Colonic mucosa (tissue), 4 donors: ENCODE measurements at regions of chr19 and their contacts with region 1.

Region 1: DNA sequence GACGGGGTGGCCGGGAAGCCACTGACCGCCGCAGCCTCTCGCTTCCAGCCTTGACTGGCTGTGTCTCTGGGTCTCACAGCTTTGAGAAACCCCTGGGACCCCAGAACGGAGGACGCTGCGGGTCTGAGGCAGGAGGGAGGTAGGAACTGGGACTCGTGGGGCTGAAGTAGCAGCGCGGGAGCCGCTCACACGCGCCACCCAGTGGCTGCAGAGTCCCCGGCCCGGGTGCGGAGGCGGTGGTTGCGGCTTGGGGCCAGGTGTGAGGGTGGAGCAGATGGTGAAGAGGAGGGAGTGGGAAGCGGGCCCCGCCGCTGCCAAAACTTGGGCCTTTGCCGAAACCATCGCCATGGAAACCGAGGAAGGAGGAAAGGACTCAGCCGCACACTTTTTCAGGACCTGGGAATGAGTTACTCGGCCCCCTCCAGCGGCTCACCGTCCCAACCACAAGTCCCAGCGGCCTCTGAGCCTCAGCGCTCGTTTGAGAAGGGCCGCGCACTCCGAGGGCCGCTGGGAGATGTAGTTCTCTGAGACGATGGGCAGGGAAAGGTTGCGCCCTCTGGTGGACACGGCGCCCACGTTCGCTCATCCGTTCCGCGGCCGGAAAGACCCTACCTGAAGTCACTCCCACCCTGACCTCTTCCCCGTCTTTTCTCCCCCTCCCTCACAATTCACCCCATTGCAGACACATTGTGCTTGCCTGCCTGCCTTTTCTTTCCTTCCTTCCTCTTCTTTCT is 2.2 kb upstream of the SLC17A7 start:
- DNase-seq: peak; percentile 95
- H3K4me3 ChIP-seq: peak overlapping the region; percentile 79
- H3K27ac ChIP-seq: peak overlapping the region; percentile 72
- H3K4me1 ChIP-seq: no peaks in the 10 kb centered on the region
- H3K27me3 ChIP-seq: peaks cover 13% of the 10 kb centered on the region
- CTCF ChIP-seq: peak; percentile 72

Region 2: GRCh38 chr19:49391581-49392399 is 51.7 kb before region 1 on chr19:
- intact Hi-C with region 1: loop called (anchors 2 kb)
- DNase-seq: peak; percentile 81
- H3K4me3 ChIP-seq: no peak overlapping the region
- H3K27ac ChIP-seq: no peak overlapping the region
- H3K4me1 ChIP-seq: no peaks in the 10 kb centered on the region
- H3K27me3 ChIP-seq: no peaks in the 10 kb centered on the region
- CTCF ChIP-seq: peak; percentile 56

Region 3: GRCh38 chr19:49403404-49404187 is 39.9 kb before region 1 on chr19:
- intact Hi-C with region 1: no loop called
- DNase-seq: no peak
- H3K4me3 ChIP-seq: no peak overlapping the region
- H3K27ac ChIP-seq: no peak overlapping the region
- H3K4me1 ChIP-seq: no peaks in the 10 kb centered on the region
- H3K27me3 ChIP-seq: no peaks in the 10 kb centered on the region
- CTCF ChIP-seq: no peak